CD14-positive monocyte (primary cell): ENCODE measurements at regions of chr15 and their contacts with region 1.

Region 1: GRCh38 chr15:23039151-23039916 is at the start of gene TUBGCP5:
- DNase-seq: peak; percentile 94 to 96 (median 95)
- H3K4me3 ChIP-seq: peak within 1 kb of the TSS; percentile 46 to 83 (median 69)
- H3K4me3 Mint-ChIP-seq: peak within 1 kb of the TSS; percentile 86 to 91
- H3K27ac ChIP-seq: peak within 1 kb of the TSS; percentile 51 to 65
- H3K27ac Mint-ChIP-seq: peak within 1 kb of the TSS; percentile 55 to 89 (median 79)
- H3K4me1 ChIP-seq: peaks cover 10 to 17% of the 10 kb centered on the region in 2 donors
- H3K4me1 Mint-ChIP-seq: peaks cover 14% of the 10 kb centered on the region
- H3K27me3 ChIP-seq: no peaks in the 10 kb centered on the region
- H3K27me3 Mint-ChIP-seq: no peaks in the 10 kb centered on the region
- CTCF ChIP-seq: no peak
- polyA plus RNA-seq, gene TUBGCP5: 1.4 to 5.8 (median 1.8) TPM

Region 2: GRCh38 chr15:22838292-22839042 is 200.9 kb before region 1 on chr15 and contains the start of gene NIPA2:
- intact Hi-C with region 1: loop called (anchors 5 to 10 kb)
- DNase-seq: peak; percentile 96 to 99 (median 98)
- H3K4me3 ChIP-seq: peak within 1 kb of the TSS; percentile 88 to 98 (median 93)
- H3K4me3 Mint-ChIP-seq: peak within 1 kb of the TSS; percentile 88 to 94
- H3K27ac ChIP-seq: peak within 1 kb of the TSS; percentile 96
- H3K27ac Mint-ChIP-seq: peak within 1 kb of the TSS; percentile 92 to 95 (median 95)
- H3K4me1 ChIP-seq: peaks cover 16 to 22% of the 10 kb centered on the region in 2 donors
- H3K4me1 Mint-ChIP-seq: peaks cover 37% of the 10 kb centered on the region
- H3K27me3 ChIP-seq: no peaks in the 10 kb centered on the region
- H3K27me3 Mint-ChIP-seq: peaks cover 0 to 3% (median 0%) of the 10 kb centered on the region in 3 donors
- CTCF ChIP-seq: no peak
- polyA plus RNA-seq, gene NIPA2: 26.7 to 75.8 (median 49.0) TPM

Region 3: GRCh38 chr15:22978691-22979520 is 60.4 kb before region 1 on chr15:
- intact Hi-C with region 1: loop called in 1 of 2 experiments (anchors 5 kb)
- DNase-seq: peak in 1 of 3 donors; percentile 20
- H3K4me3 ChIP-seq: peak overlapping the region; percentile 70 to 85 (median 74)
- H3K4me3 Mint-ChIP-seq: peak overlapping the region; percentile 97 to 98
- H3K27ac ChIP-seq: no peak overlapping the region
- H3K27ac Mint-ChIP-seq: peak overlapping the region in 3 of 7 donors; percentile 8 to 71 (median 33)
- H3K4me1 ChIP-seq: peaks cover 32 to 39% of the 10 kb centered on the region in 2 donors
- H3K4me1 Mint-ChIP-seq: peaks cover 34% of the 10 kb centered on the region
- H3K27me3 ChIP-seq: peaks cover 2 to 6% of the 10 kb centered on the region in 2 donors
- H3K27me3 Mint-ChIP-seq: peaks cover 13 to 22% (median 15%) of the 10 kb centered on the region in 3 donors
- CTCF ChIP-seq: no peak